Naive thymus-derived CD4-positive, alpha-beta T cell (primary cell): ENCODE measurements at regions of chr9 and their contacts with region 1.

Region 1: DNA sequence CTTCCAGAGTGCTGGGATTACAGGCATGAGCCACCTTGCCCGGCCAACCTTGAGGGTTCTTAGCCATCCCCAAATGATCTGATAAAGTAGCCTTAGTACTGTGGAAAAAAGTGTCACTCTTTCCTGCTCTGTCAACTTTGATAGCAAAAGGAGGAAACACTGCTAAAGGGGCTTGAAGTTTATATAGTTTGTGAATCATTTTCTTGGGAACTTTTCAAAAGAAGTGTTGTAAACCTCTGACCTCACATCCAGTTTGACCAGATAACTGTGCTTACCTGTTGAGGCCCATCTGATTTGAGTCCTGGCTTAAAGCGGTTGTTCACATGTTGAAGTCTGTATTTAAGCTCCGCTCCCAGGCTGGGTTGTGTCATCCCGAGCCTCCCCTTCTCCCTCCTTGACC is 303.3 kb downstream of the DOCK8 start:
- DNase-seq: no peak
- ATAC-seq: no peak
- H3K4me3 ChIP-seq: peak overlapping the region; percentile 11
- H3K4me3 Mint-ChIP-seq: peak overlapping the region in 8 of 10 donors; percentile 34 to 88 (median 82)
- H3K27ac ChIP-seq: peak overlapping the region; percentile 57
- H3K27ac Mint-ChIP-seq: peak overlapping the region in 8 of 9 donors; percentile 55 to 98 (median 95)
- H3K4me1 ChIP-seq: peaks cover 6 to 39% of the 10 kb centered on the region in 2 donors
- H3K4me1 Mint-ChIP-seq: peaks cover 15 to 59% (median 54%) of the 10 kb centered on the region in 7 donors
- H3K27me3 ChIP-seq: no peaks in the 10 kb centered on the region
- H3K27me3 Mint-ChIP-seq: peaks cover 0 to 4% (median 0%) of the 10 kb centered on the region in 5 donors

Region 2: GRCh38 chr9:469672-470551 is 48.1 kb before region 1 on chr9:
- CTCF ChIA-PET with region 1: no interaction called
- POLR2A ChIA-PET with region 1: interaction called, 3 read pairs
- intact Hi-C with region 1: loop called in 1 of 2 experiments (anchors 1 kb)
- DNase-seq: peak; percentile 82 to 92 (median 89)
- ATAC-seq: peak; percentile 93
- H3K4me3 ChIP-seq: peak overlapping the region; percentile 84
- H3K4me3 Mint-ChIP-seq: peak overlapping the region; percentile 92 to 99 (median 97)
- H3K27ac ChIP-seq: peak overlapping the region; percentile 75
- H3K27ac Mint-ChIP-seq: peak overlapping the region; percentile 88 to 99 (median 94)
- H3K4me1 ChIP-seq: peaks cover 0 to 6% of the 10 kb centered on the region in 2 donors
- H3K4me1 Mint-ChIP-seq: peaks cover 17 to 32% (median 27%) of the 10 kb centered on the region in 7 donors
- H3K27me3 ChIP-seq: no peaks in the 10 kb centered on the region
- H3K27me3 Mint-ChIP-seq: no peaks in the 10 kb centered on the region

Region 3: GRCh38 chr9:503881-504852 is 13.8 kb before region 1 on chr9:
- CTCF ChIA-PET with region 1: interaction called, 12 read pairs
- POLR2A ChIA-PET with region 1: interaction called, 18 read pairs
- intact Hi-C with region 1: loop called in 1 of 2 experiments (anchors 1 kb)
- DNase-seq: peak; percentile 66 to 86 (median 82)
- ATAC-seq: peak; percentile 90
- H3K4me3 ChIP-seq: peak within 1 kb of the TSS; percentile 74
- H3K4me3 Mint-ChIP-seq: peak within 1 kb of the TSS; percentile 81 to 96 (median 90)
- H3K27ac ChIP-seq: peak within 1 kb of the TSS; percentile 56
- H3K27ac Mint-ChIP-seq: peak within 1 kb of the TSS; percentile 59 to 95 (median 88)
- H3K4me1 ChIP-seq: peaks cover 0 to 9% of the 10 kb centered on the region in 2 donors
- H3K4me1 Mint-ChIP-seq: peaks cover 7 to 32% (median 24%) of the 10 kb centered on the region in 7 donors
- H3K27me3 ChIP-seq: peaks cover 0 to 4% of the 10 kb centered on the region in 2 donors
- H3K27me3 Mint-ChIP-seq: peaks cover 0 to 54% (median 13%) of the 10 kb centered on the region in 5 donors

Region 4: GRCh38 chr9:530681-531080 is 12.7 kb after region 1 on chr9:
- CTCF ChIA-PET with region 1: no interaction called
- POLR2A ChIA-PET with region 1: interaction called, 15 read pairs
- intact Hi-C with region 1: loop called in 1 of 2 experiments (anchors 1 kb)
- DNase-seq: no peak
- ATAC-seq: no peak
- H3K4me3 ChIP-seq: no peak overlapping the region
- H3K4me3 Mint-ChIP-seq: no peak overlapping the region
- H3K27ac ChIP-seq: no peak overlapping the region
- H3K27ac Mint-ChIP-seq: peak overlapping the region in 2 of 9 donors; percentile 2 to 25
- H3K4me1 ChIP-seq: no peaks in the 10 kb centered on the region
- H3K4me1 Mint-ChIP-seq: peaks cover 0 to 22% (median 4%) of the 10 kb centered on the region in 7 donors
- H3K27me3 ChIP-seq: no peaks in the 10 kb centered on the region
- H3K27me3 Mint-ChIP-seq: peaks cover 0 to 3% (median 0%) of the 10 kb centered on the region in 5 donors

Region 5: GRCh38 chr9:536597-537511 is 18.9 kb after region 1 on chr9:
- CTCF ChIA-PET with region 1: no interaction called
- POLR2A ChIA-PET with region 1: interaction called, 3 read pairs
- intact Hi-C with region 1: loop called in 1 of 2 experiments (anchors 2 kb)
- DNase-seq: peak in 3 of 9 donors; percentile 8 to 19 (median 12)
- ATAC-seq: no peak
- H3K4me3 ChIP-seq: peak overlapping the region; percentile 33
- H3K4me3 Mint-ChIP-seq: peak overlapping the region; percentile 50 to 81 (median 63)
- H3K27ac ChIP-seq: peak overlapping the region; percentile 51
- H3K27ac Mint-ChIP-seq: peak overlapping the region in 8 of 9 donors; percentile 63 to 96 (median 89)
- H3K4me1 ChIP-seq: peaks cover 0 to 4% of the 10 kb centered on the region in 2 donors
- H3K4me1 Mint-ChIP-seq: peaks cover 7 to 37% (median 14%) of the 10 kb centered on the region in 7 donors
- H3K27me3 ChIP-seq: no peaks in the 10 kb centered on the region
- H3K27me3 Mint-ChIP-seq: peaks cover 0 to 3% (median 0%) of the 10 kb centered on the region in 5 donors

Region 6: GRCh38 chr9:751137-752051 is 233.4 kb after region 1 on chr9:
- CTCF ChIA-PET with region 1: no interaction called
- POLR2A ChIA-PET with region 1: no interaction called
- intact Hi-C with region 1: no loop called
- DNase-seq: no peak
- ATAC-seq: no peak
- H3K4me3 ChIP-seq: no peak overlapping the region
- H3K4me3 Mint-ChIP-seq: peak overlapping the region in 3 of 10 donors; percentile 14 to 36 (median 35)
- H3K27ac ChIP-seq: no peak overlapping the region
- H3K27ac Mint-ChIP-seq: peak overlapping the region in 3 of 9 donors; percentile 18 to 60 (median 54)
- H3K4me1 ChIP-seq: peaks cover 19% of the 10 kb centered on the region in 2 donors
- H3K4me1 Mint-ChIP-seq: peaks cover 28 to 62% (median 49%) of the 10 kb centered on the region in 7 donors
- H3K27me3 ChIP-seq: no peaks in the 10 kb centered on the region
- H3K27me3 Mint-ChIP-seq: peaks cover 0 to 5% (median 0%) of the 10 kb centered on the region in 5 donors